A549 (cell line): ENCODE measurements at regions of chr21 and their contacts with region 1.

Region 1: DNA sequence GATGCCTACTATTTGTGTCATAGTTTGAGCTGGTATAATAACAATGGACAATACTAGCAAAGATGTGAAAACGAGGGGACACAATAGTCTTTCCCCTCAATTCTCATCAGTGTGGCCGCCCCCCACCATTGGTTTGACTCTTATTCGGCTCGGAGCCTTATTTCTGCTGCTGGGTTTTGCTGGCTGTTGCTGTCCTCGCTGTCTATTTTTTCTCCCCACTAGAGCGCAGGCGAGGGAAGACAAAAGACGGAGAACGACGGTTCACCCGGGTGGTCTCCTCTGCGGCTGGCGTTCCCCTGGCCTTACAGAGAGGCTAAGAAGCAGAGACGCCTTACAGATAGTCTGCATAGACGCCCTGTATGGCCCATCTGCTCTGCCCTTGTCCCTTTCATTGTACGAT is 19.4 kb downstream of the CLIC6 start:
- DNase-seq: peak; percentile 18 to 28
- ATAC-seq: peak; percentile 64 to 78; a peak in 4 of 6 replicates
- H3K4me3 ChIP-seq: no peak overlapping the region
- H3K27ac ChIP-seq: no peak overlapping the region
- H3K4me1 ChIP-seq: no peaks in the 10 kb centered on the region
- CTCF ChIP-seq: peak; percentile 50
- EP300 ChIP-seq: no peak
- POLR2A ChIP-seq: no peak
- RAD21 ChIP-seq: peak; percentile 44 to 47; a peak in 3 of 5 replicates

Region 2: GRCh38 chr21:34526618-34527290 is 161.4 kb before region 1 on chr21:
- CTCF ChIA-PET with region 1: no interaction called
- POLR2A ChIA-PET with region 1: no interaction called
- DNase-seq: peak; percentile 78 to 93
- ATAC-seq: peak; percentile 97
- H3K4me3 ChIP-seq: peak overlapping the region; percentile 49
- H3K27ac ChIP-seq: peak overlapping the region; percentile 85 to 89
- H3K4me1 ChIP-seq: peaks cover 42% of the 10 kb centered on the region
- CTCF ChIP-seq: no peak
- EP300 ChIP-seq: no peak; a peak in 1 of 5 replicates
- POLR2A ChIP-seq: no peak
- RAD21 ChIP-seq: no peak

Region 3: GRCh38 chr21:34675171-34675570 is 13.0 kb before region 1 on chr21:
- CTCF ChIA-PET with region 1: interaction called, 17 read pairs
- POLR2A ChIA-PET with region 1: no interaction called
- DNase-seq: no peak
- ATAC-seq: no peak
- H3K4me3 ChIP-seq: no peak overlapping the region
- H3K27ac ChIP-seq: no peak overlapping the region
- H3K4me1 ChIP-seq: no peaks in the 10 kb centered on the region
- CTCF ChIP-seq: no peak
- EP300 ChIP-seq: no peak
- POLR2A ChIP-seq: no peak
- RAD21 ChIP-seq: no peak

Region 4: DNA sequence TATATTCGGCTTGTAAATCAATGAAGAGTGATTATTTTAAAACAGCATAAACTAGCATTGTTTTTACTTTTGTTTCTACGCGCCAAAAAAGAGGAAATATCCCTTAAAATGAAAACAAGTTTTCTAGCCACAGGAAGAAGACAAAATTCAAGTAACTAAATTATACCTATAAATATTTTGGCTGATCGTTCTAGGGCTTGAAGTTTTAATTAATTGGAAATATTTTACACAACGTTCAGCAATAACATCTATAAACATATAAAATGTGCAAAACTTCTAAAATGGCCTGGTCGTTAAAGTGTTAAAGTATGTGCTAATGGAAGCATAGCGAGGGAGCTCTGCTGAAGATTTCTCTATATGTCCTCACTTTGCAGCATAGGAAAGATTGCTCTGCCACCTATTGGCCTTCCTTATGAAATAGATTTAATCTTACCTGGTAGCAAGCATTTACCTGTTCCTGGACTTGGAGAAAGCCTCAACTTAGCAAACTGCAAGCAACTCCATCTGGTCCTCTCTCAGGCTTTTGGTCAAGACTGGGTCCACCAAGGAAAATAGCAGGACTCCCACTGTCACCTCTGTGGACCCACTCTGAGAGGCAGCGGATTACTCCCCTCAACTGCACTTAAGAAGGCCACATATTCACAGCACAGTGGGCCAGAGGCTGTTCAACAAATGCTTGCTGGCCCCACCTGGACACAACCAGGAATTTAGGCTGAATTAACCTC is 712.2 kb after region 1 on chr21:
- CTCF ChIA-PET with region 1: interaction called, 14 read pairs
- POLR2A ChIA-PET with region 1: no interaction called
- DNase-seq: peak; percentile 5 to 65
- ATAC-seq: peak; percentile 75 to 85
- H3K4me3 ChIP-seq: no peak overlapping the region
- H3K27ac ChIP-seq: no peak overlapping the region
- H3K4me1 ChIP-seq: peaks cover 5% of the 10 kb centered on the region; the same call in 1 of the 3 replicates
- CTCF ChIP-seq: peak; percentile 63
- EP300 ChIP-seq: no peak
- POLR2A ChIP-seq: no peak
- RAD21 ChIP-seq: peak; percentile 83 to 87

Region 5: GRCh38 chr21:35840197-35840799 is 1152.2 kb after region 1 on chr21:
- CTCF ChIA-PET with region 1: interaction called, 25 read pairs
- POLR2A ChIA-PET with region 1: no interaction called
- DNase-seq: peak; percentile 5 to 72
- ATAC-seq: peak in 1 of 2 experiments; percentile 62; a peak in 3 of 6 replicates
- H3K4me3 ChIP-seq: no peak overlapping the region
- H3K27ac ChIP-seq: no peak overlapping the region
- H3K4me1 ChIP-seq: no peaks in the 10 kb centered on the region
- CTCF ChIP-seq: peak; percentile 77
- EP300 ChIP-seq: no peak
- POLR2A ChIP-seq: no peak
- RAD21 ChIP-seq: peak; percentile 72 to 81

Region 6: DNA sequence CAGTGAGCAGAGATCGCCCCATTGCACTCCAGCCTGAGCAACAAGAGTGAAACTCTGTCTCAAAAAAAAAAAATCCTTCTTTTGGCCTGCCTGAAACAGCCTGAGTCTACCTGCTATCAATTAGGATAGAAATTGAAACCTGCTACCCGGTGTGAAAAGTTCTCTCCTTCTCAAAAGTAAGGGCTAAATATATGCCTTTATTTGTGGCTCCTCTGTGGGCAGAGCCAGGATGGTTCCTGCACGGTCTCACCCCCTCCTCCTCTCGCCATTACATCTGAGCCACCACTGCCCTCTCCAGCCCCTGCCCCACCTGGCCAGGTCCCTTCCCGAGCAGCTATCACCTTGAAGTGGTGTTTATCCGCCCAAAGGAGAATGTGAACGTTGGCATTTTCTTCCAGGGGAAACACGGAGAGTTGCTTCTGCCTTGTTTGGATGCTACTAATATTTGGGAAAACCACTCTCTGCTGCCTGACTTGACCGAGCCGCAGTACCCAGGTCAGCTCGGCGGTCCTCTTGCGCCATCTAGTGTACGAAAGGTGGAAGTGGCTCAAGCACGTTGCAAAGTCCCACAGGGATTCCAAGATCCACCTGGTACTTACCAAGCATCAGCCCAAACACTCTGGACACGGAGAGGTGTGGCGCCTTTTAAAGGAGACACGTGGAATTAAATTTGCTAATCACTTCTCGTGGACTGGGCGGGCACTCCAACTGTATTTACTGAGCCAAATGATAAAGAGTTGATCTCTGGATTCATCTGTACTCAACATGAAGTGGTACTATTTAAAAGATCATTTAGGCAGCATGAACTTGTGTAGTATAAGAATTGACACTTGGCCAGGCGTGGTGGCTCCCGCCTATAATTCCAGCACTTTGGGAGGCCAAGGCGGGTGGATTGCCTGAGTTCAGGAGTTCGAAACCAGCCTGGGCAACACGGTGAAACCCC is 1340.3 kb after region 1 on chr21:
- CTCF ChIA-PET with region 1: interaction called, 10 read pairs
- POLR2A ChIA-PET with region 1: no interaction called
- DNase-seq: peak; percentile 51 to 67
- ATAC-seq: peak; percentile 91 to 97
- H3K4me3 ChIP-seq: no peak overlapping the region
- H3K27ac ChIP-seq: no peak overlapping the region
- H3K4me1 ChIP-seq: no peaks in the 10 kb centered on the region
- CTCF ChIP-seq: peak; percentile 73
- EP300 ChIP-seq: no peak
- POLR2A ChIP-seq: no peak
- RAD21 ChIP-seq: peak; percentile 82 to 85